AG04450 (cell line): ENCODE measurements at regions of chr10 and their contacts with region 1.

Region 1: GRCh38 chr10:128064108-128064969 is 61.9 kb downstream of the MKI67 start:
- DNase-seq: no peak
- H3K4me3 ChIP-seq: no peak overlapping the region
- H3K27ac ChIP-seq: no peak overlapping the region
- H3K27me3 ChIP-seq: no peaks in the 10 kb centered on the region
- CTCF ChIP-seq: no peak

Region 2: GRCh38 chr10:128035557-128035973 is 28.8 kb before region 1 on chr10:
- CTCF ChIA-PET with region 1: interaction called, 53 read pairs
- POLR2A ChIA-PET with region 1: no interaction called
- DNase-seq: no peak
- H3K4me3 ChIP-seq: no peak overlapping the region
- H3K27ac ChIP-seq: no peak overlapping the region
- H3K27me3 ChIP-seq: no peaks in the 10 kb centered on the region
- CTCF ChIP-seq: peak; percentile 67

Region 3: GRCh38 chr10:128165536-128165935 is 101.2 kb after region 1 on chr10:
- CTCF ChIA-PET with region 1: no interaction called
- POLR2A ChIA-PET with region 1: no interaction called
- DNase-seq: no peak
- H3K4me3 ChIP-seq: no peak overlapping the region
- H3K27ac ChIP-seq: no peak overlapping the region
- H3K27me3 ChIP-seq: no peaks in the 10 kb centered on the region
- CTCF ChIP-seq: no peak